MCF 10A (cell line): ENCODE measurements at regions of chr5 and their contacts with region 1.

Region 1: DNA sequence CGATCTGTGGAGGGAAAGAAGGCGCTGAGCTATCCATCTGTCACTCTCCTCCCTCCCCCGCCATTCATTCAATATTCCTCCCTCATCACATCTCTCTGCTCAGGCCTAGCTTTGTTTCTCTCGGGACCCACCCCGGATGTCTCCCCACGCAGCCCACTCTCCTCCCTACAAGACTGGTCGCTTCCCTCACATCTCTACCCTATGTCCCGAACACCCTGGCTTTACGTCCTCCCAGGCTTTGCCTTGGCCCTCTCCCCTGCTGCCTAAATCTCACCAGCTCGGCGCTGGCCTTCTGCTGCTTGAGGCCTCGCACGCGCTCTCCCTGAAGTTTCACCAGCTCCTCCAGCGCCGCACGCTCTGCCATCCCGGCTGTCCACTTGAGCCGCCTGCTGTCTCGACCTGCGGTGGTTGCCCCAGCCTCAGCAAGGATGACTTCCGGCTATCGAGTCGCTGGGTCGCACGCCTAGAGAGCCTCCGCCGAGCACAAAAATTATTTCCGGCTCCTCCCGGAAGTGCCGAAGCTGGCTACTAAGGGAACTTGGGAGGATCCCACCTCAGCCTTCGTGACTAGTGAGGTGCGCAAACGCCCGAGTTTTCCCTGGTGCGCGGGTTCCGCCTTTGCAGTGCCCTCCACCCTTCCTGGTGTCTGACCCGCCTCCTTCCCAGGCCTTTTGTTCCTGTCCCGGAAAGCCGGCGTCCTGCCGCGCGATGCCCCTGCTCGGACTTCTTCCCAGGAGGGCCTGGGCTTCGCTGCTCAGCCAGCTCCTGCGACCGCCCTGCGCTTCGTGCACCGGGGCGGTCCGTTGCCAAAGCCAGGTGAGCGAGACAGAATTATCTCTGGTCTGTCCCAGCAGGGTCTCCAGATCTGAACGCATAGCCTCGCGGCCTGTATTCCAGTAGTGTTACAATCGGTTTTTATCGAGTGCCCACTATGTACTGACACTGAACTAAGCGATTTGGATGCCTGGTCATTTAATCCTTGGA is at the starts of genes HARS1 and HARS2:
- DNase-seq: peak; percentile 99
- H3K4me3 Mint-ChIP-seq: peak within 1 kb of the TSS; percentile 88
- H3K27ac Mint-ChIP-seq: peak within 1 kb of the TSS; percentile 87
- H3K4me1 Mint-ChIP-seq: peaks cover 16% of the 10 kb centered on the region
- H3K27me3 Mint-ChIP-seq: no peaks in the 10 kb centered on the region
- CTCF ChIP-seq: no peak
- total RNA-seq, gene HARS1: 126 and 131 TPM in 2 replicates
- total RNA-seq, gene HARS2: 48.5 and 54.3 TPM in 2 replicates

Region 2: DNA sequence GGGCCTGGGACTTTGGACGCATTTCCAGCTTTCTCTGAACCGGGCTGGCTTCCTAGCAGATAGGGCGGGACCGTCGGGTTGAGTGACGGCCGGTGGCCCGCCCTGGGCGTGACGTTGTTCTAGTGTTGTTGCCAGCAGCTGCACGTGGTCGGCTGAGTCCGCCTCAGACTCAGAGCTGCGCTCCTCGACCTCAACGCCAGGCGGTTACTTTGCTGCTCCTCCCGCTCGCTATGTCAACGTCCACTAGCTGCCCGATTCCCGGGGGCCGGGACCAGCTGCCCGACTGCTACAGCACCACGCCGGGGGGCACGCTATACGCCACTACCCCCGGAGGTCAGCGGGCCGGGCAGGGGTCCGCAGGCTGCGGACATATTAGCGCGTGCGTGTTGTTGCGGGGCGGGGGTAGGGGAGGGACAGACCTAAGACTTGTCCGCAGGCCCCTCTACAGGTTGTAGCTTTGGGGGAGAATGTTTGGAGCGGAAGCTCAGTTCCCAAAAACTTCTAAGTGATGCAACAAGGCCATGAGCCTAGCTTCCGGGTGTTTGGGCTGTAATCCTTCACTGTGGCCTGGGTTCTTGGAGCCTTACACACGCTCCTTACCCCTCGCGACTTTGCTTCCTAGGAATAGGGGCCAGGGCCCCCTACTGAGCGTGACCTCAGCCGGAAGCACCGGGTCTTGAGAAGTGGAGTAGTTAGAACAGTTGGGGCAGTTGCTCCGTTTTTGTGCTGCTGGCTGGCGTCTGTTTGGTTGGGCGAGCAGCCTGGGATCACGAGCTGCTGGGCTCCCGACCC is 143.5 kb before region 1 on chr5 and contains the start of gene EIF4EBP3:
- CTCF ChIA-PET with region 1: interaction called, 4 read pairs
- POLR2A ChIA-PET with region 1: interaction called, 29 read pairs
- intact Hi-C with region 1: no loop called
- DNase-seq: peak; percentile 97
- H3K4me3 Mint-ChIP-seq: peak within 1 kb of the TSS; percentile 77
- H3K27ac Mint-ChIP-seq: peak within 1 kb of the TSS; percentile 80
- H3K4me1 Mint-ChIP-seq: peaks cover 27% of the 10 kb centered on the region
- H3K27me3 Mint-ChIP-seq: no peaks in the 10 kb centered on the region
- CTCF ChIP-seq: peak; percentile 74
- total RNA-seq, gene EIF4EBP3: 25.3 and 35.3 TPM in 2 replicates

Region 3: DNA sequence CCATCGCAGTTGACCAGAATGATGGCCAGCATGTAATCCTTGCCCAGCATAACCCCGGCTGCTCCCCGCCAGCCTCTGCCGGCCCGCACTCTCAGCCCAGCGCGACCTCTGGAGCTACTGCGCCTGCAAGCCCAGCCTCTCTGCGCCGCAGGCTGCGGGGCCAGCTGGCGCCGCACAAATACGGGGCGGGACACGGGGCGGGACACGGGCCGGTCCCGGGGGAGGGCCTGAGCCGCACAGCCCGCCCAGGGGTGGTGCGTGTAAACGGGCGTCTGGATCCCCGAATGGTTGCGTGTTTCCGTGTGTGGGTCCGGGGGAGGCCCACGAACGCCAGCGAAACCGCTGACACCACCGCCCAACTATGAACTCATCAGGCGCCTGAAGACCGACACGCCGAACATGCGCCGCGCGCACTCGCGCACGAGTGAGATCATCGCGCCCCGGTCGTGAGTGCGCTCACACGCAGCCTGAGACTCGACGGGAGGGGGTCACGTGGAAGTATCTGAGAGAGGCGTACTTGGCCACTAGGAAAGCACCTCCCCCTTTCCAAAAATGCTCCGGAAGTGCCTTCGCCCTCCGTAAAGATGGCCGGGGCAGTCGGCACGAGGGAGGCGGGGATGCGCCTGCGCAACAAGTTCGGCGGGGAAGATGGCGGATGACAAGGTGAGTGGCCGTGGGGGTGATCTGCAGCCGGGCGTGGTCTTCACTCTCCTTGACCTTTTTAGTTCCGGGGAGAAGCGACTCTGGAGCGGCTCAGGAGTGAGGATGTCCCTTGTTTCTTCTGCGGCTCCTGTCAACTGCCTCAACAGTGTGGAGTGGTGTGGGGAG is 126.8 kb before region 1 on chr5 and contains the starts of genes APBB3 and SLC35A4:
- CTCF ChIA-PET with region 1: interaction called, 3 read pairs
- POLR2A ChIA-PET with region 1: interaction called, 37 read pairs
- intact Hi-C with region 1: no loop called
- DNase-seq: peak; percentile 99
- H3K4me3 Mint-ChIP-seq: peak within 1 kb of the TSS; percentile 84
- H3K27ac Mint-ChIP-seq: peak within 1 kb of the TSS; percentile 95
- H3K4me1 Mint-ChIP-seq: peaks cover 22% of the 10 kb centered on the region
- H3K27me3 Mint-ChIP-seq: no peaks in the 10 kb centered on the region
- CTCF ChIP-seq: no peak
- total RNA-seq, gene APBB3: 22.7 and 28.1 TPM in 2 replicates
- total RNA-seq, gene SLC35A4: 84.0 and 119 TPM in 2 replicates

Region 4: DNA sequence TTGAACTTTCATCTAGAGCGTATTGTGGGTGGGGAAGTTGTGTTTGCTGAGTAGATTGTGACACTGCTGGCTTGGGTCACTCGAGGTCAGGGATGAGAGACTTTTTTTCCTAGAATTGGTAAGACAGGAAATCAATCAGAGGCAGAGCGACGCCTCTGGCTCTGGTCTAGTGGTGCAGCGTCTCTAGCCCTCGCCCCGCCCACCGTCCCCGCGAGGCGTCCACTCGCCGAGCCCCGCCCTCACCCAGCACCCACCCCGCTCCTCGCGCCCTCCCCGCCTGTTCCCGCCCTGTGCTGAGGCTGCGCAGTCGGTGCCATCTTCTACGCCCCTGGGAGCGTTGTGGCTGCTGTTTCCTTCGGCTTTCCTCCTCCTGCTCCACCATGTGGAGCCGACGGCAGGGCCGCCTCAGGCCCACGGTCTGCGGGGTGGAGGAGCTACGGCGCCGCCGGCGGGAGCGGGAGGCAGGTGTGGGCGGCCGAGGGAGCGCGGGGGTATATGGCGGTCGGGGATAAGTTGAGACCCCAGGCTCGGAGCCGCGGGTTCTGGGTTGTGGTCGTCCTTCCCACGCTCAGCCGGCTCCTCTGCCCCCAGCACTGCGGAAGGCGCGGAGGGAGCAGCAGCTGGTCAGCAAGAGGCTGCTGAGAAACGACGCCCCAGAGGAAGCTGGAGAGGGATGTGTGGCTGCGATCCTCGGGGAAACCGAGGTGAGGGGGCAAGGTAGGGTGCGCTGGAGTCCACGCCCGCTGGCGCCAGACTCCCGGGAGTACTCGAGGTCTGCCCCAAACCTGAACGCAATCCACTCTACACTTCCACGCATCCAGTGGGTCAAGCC is 51.9 kb before region 1 on chr5 and contains the start of gene TMCO6:
- CTCF ChIA-PET with region 1: no interaction called
- POLR2A ChIA-PET with region 1: interaction called, 121 read pairs
- intact Hi-C with region 1: no loop called
- DNase-seq: peak; percentile 99
- H3K4me3 Mint-ChIP-seq: peak within 1 kb of the TSS; percentile 83
- H3K27ac Mint-ChIP-seq: peak within 1 kb of the TSS; percentile 92
- H3K4me1 Mint-ChIP-seq: peaks cover 36% of the 10 kb centered on the region
- H3K27me3 Mint-ChIP-seq: no peaks in the 10 kb centered on the region
- CTCF ChIP-seq: peak; percentile 78
- total RNA-seq, gene TMCO6: 15.7 and 17.2 TPM in 2 replicates

Region 5: GRCh38 chr5:140677947-140678346 is 13.3 kb before region 1 on chr5:
- CTCF ChIA-PET with region 1: interaction called, 14 read pairs
- POLR2A ChIA-PET with region 1: interaction called, 24 read pairs
- intact Hi-C with region 1: no loop called
- DNase-seq: no peak
- H3K4me3 Mint-ChIP-seq: no peak overlapping the region
- H3K27ac Mint-ChIP-seq: no peak overlapping the region
- H3K4me1 Mint-ChIP-seq: no peaks in the 10 kb centered on the region
- H3K27me3 Mint-ChIP-seq: no peaks in the 10 kb centered on the region
- CTCF ChIP-seq: no peak

Region 6: DNA sequence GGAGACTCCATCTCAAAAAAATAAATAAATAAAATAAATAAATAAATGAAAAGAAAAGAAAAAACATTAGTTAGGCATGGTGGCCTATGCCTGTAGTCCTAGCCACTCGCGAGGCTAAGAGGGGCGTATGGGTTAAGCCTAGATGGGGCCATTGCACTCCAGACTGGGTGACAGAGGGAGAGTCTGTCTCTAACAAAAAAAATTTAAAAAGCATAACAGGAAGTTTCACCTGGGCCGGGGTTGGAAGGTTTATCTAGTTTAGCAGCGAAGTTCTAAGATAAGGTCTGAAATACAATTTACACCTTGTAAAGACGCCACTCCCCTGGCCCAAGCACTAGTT is 27.0 kb after region 1 on chr5:
- CTCF ChIA-PET with region 1: interaction called, 12 read pairs
- POLR2A ChIA-PET with region 1: interaction called, 36 read pairs
- intact Hi-C with region 1: no loop called
- DNase-seq: no peak
- H3K4me3 Mint-ChIP-seq: peak overlapping the region; percentile 73
- H3K27ac Mint-ChIP-seq: peak overlapping the region; percentile 86
- H3K4me1 Mint-ChIP-seq: peaks cover 24% of the 10 kb centered on the region
- H3K27me3 Mint-ChIP-seq: no peaks in the 10 kb centered on the region
- CTCF ChIP-seq: no peak

Region 7: DNA sequence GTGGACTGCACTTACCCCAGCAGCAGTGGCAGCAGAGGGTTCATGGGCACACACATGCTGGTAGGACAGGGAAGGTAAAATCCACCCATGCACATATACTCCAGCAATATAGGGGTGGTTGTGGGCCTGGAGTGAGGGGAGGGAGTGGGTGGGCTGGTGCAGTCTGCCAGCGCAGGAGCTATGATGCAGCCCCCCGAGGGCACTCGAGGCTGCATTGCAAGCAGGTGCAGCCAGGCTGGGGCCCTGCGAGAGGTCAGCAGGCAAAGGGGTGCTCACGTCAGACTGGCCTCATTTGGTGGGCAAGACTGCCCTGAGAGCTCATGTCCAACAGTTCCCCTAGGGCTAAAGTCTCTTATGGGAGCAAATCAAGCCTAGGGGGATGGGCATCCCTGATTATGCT is 62.3 kb after region 1 on chr5:
- CTCF ChIA-PET with region 1: no interaction called
- POLR2A ChIA-PET with region 1: no interaction called
- intact Hi-C with region 1: no loop called
- DNase-seq: no peak
- H3K4me3 Mint-ChIP-seq: no peak overlapping the region
- H3K27ac Mint-ChIP-seq: no peak overlapping the region
- H3K4me1 Mint-ChIP-seq: no peaks in the 10 kb centered on the region
- H3K27me3 Mint-ChIP-seq: no peaks in the 10 kb centered on the region
- CTCF ChIP-seq: no peak

Region 8: GRCh38 chr5:141359790-141360426 is 668.7 kb after region 1 on chr5 and contains the start of gene PCDHGB2:
- CTCF ChIA-PET with region 1: no interaction called
- POLR2A ChIA-PET with region 1: no interaction called
- intact Hi-C with region 1: no loop called
- DNase-seq: peak; percentile 39
- H3K4me3 Mint-ChIP-seq: peak within 1 kb of the TSS; percentile 7
- H3K27ac Mint-ChIP-seq: no peak within 1 kb of the TSS
- H3K4me1 Mint-ChIP-seq: no peaks in the 10 kb centered on the region
- H3K27me3 Mint-ChIP-seq: no peaks in the 10 kb centered on the region
- CTCF ChIP-seq: peak; percentile 26
- total RNA-seq, gene PCDHGB2: 0.61 and 0.88 TPM in 2 replicates